Motor neuron (in vitro differentiated cells): ENCODE measurements at regions of chr14 and their contacts with region 1.

Region 1: GRCh38 chr14:54329082-54329695 is 67.6 kb upstream of the CDKN3 start:
- ATAC-seq: peak; percentile 61 to 98 (median 80)
- H3K4me3 ChIP-seq: no peak overlapping the region
- H3K27ac ChIP-seq: no peak overlapping the region
- H3K4me1 ChIP-seq: peaks cover 0 to 2% of the 10 kb centered on the region in 2 donors

Region 2: DNA sequence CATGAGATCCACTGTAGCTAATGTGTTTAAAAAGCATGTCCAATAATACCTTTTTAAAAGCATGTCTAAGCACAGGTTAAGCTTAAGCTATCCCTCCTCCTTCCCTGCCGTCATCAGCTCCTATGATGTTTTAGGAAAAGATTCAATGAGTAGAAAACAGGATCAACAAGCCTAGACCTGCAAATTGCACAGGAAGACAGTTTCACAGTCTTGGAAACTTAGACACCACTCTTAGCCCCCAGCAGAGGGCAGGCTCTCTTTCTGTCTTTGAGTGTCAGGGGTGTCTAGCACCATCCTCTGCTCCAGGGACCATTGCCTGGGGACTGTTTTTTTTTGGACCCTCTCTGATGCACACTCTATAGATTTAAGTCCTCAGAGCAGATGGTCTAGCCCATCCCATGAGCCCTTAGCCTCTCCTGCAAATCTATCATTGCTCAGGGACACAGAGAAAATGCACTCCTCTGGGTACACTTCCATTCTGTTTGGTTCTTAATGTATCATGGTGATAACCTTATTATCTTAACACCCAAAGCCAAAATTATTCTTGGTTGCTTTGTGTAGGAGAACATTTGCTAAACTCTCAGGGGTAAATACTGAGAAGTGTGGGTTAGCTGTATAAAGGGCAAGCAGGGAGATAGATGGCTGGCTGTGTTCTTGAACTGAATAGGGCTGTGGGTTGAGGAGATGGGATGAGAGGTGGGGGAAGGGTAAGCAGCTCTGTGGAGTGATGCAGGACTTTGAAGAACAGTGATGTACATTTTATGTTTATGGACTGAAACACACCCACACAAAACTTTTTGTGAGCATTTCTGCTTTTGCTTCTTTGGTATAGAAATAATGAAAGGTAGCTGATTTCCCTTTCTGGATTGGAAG is 916.1 kb before region 1 on chr14:
- in situ Hi-C with region 1: loop called in 2 of 9 experiments (anchors 25 kb)
- ATAC-seq: peak in 3 of 8 experiments; percentile 59 to 74 (median 66)
- H3K4me3 ChIP-seq: no peak overlapping the region
- H3K27ac ChIP-seq: no peak overlapping the region
- H3K4me1 ChIP-seq: no peaks in the 10 kb centered on the region

Region 3: GRCh38 chr14:53539489-53540126 is 789.6 kb before region 1 on chr14:
- in situ Hi-C with region 1: loop called in 8 of 9 experiments (anchors 25 kb)
- ATAC-seq: peak; percentile 58 to 92 (median 78)
- H3K4me3 ChIP-seq: no peak overlapping the region
- H3K27ac ChIP-seq: no peak overlapping the region
- H3K4me1 ChIP-seq: peaks cover 6% of the 10 kb centered on the region in 2 donors

Region 4: GRCh38 chr14:53953002-53953827 is 376.0 kb before region 1 on chr14:
- in situ Hi-C with region 1: loop called in 2 of 9 experiments (anchors 25 kb)
- ATAC-seq: peak; percentile 61 to 90 (median 88)
- H3K4me3 ChIP-seq: peak overlapping the region; percentile 37 to 53 (median 44)
- H3K27ac ChIP-seq: no peak overlapping the region
- H3K4me1 ChIP-seq: peaks cover 0 to 9% of the 10 kb centered on the region in 2 donors

Region 5: GRCh38 chr14:54175298-54175942 is 153.8 kb before region 1 on chr14:
- in situ Hi-C with region 1: loop called in 1 of 9 experiments (anchors 25 kb)
- ATAC-seq: peak in 4 of 8 experiments; percentile 43 to 74 (median 68)
- H3K4me3 ChIP-seq: no peak overlapping the region
- H3K27ac ChIP-seq: no peak overlapping the region
- H3K4me1 ChIP-seq: peaks cover 5 to 6% of the 10 kb centered on the region in 2 donors